Activated CD4-positive, alpha-beta memory T cell treated with anti-CD3 and anti-CD28 coated beads, Interleukin-2, amount 10 ng/mL, durations not matched to agents 7 days and 5 days (primary cell): ENCODE measurements at regions of chr3 and their contacts with region 1.

Region 1: GRCh38 chr3:183085634-183086390 is 13.5 kb downstream of the MCCC1 start:
- DNase-seq: no peak
- H3K4me3 Mint-ChIP-seq: no peak overlapping the region
- H3K27ac Mint-ChIP-seq: no peak overlapping the region
- H3K4me1 Mint-ChIP-seq: no peaks in the 10 kb centered on the region
- H3K27me3 Mint-ChIP-seq: no peaks in the 10 kb centered on the region

Region 2: DNA sequence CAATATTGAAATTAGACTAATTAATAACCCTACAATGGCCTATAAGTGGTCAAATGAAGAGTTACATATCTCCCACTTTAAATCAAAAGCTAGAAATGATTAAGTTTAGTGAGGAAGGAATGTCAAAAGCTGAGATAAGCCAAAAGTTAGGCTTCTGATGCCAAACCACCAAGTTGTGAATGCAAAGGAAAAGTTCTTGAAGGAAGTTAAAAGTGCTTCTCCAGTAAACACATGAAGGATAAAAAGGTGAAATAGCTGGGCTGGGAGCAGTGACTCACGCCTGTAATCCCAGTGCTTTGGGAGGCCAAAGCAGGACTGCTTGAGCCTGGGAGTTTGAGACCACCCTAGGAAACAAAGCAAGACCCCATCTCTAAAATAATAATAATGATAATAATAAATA is 58.5 kb before region 1 on chr3:
- CTCF ChIA-PET with region 1: no interaction called
- POLR2A ChIA-PET with region 1: no interaction called
- DNase-seq: no peak
- H3K4me3 Mint-ChIP-seq: no peak overlapping the region
- H3K27ac Mint-ChIP-seq: no peak overlapping the region
- H3K4me1 Mint-ChIP-seq: no peaks in the 10 kb centered on the region
- H3K27me3 Mint-ChIP-seq: no peaks in the 10 kb centered on the region

Region 3: DNA sequence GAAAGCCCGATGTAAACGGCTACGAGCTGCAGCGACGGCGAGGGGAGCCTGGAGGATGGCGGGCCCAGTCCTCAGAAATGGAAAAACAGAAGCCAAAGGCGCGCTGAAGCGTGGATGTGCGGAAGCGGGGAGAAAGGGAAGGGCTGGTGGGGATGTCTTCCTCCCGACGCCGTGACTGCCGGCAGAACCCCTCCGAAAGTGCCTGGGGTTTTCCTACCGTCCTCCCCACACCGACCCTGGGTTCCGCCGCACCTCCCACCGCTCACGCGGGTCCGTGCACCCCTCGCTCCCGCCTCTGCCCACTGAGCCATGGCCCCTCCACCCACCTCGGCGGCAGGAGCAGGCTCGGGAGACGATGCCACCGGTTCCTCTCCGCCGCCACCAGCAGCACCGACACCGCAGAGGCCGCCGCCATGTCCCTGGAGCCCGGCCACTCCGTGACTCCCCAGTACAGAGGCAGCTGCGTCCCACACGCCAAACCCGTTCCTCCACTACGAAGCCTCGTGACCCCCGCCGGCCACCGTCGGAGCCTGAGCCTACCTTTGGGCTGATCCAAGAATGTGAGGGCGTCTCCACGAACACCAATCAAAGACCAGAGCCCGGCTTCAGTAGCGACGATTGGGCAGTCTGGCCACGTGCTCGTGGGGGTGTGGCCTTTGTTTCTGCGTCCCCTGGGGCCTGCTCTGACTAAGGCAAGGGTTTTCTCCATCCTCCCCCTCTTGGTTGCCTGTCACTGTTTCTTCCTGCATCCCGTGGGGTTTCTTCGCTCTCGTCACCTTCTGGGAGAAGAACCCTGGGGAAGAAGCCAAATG is 13.4 kb after region 1 on chr3 and contains the start of gene MCCC1:
- CTCF ChIA-PET with region 1: interaction called, 42 read pairs
- POLR2A ChIA-PET with region 1: interaction called, 4 read pairs
- DNase-seq: peak; percentile 98
- H3K4me3 Mint-ChIP-seq: peak within 1 kb of the TSS; percentile 96
- H3K27ac Mint-ChIP-seq: peak within 1 kb of the TSS; percentile 84
- H3K4me1 Mint-ChIP-seq: peaks cover 30% of the 10 kb centered on the region
- H3K27me3 Mint-ChIP-seq: no peaks in the 10 kb centered on the region
- total RNA-seq, gene MCCC1: 23.5 to 27.5 TPM

Region 4: DNA sequence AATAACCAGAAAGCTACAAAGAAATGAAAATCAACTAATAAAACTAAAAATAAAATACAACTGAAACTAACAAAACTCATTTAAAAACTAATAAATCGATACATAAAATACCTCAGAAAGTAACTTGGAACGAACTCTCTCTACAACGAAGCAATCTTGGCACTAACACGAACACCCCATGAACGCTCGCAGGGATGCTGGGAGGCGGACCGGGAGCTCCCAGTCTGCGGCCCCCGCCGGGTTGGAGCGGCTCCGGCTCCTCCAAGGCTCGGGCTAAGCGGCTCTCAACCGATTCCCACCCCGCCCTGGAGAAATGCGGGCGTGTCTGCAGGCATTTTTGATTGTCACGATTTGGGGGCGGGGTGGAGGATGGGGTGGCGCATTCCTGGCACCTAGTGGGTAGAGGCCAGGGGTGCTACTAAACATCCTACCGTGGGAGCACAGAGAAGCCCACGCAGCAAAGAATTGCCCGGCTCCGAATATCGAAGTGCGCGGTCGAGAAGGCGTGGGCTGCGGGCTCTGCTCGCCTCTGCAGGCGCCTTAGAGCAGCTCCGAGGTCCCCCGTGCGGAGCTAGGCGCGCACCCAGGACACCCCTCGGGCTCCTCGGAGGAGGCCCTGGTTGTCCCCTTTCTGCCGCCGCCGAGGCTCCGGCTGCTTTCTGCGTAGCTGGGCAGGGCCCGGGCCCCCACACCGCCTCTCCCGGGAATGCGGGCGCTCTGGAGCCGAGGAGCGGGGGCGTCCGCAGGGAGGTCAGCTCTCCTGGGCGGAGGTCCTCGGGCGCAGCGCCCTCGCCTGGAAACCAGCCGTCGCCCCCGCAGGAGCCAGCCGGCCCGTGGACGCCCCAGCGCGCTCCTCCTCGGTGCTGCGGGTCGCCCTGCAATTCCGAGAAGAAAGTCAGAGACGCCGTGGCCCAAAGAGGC is 93.1 kb after region 1 on chr3:
- CTCF ChIA-PET with region 1: no interaction called
- POLR2A ChIA-PET with region 1: no interaction called
- DNase-seq: peak; percentile 48
- H3K4me3 Mint-ChIP-seq: peak overlapping the region; percentile 65
- H3K27ac Mint-ChIP-seq: no peak overlapping the region
- H3K4me1 Mint-ChIP-seq: peaks cover 12% of the 10 kb centered on the region
- H3K27me3 Mint-ChIP-seq: peaks cover 33% of the 10 kb centered on the region

Region 5: GRCh38 chr3:183385698-183386613 is 300.1 kb after region 1 on chr3:
- CTCF ChIA-PET with region 1: no interaction called
- POLR2A ChIA-PET with region 1: no interaction called
- DNase-seq: peak; percentile 60
- H3K4me3 Mint-ChIP-seq: no peak overlapping the region
- H3K27ac Mint-ChIP-seq: no peak overlapping the region
- H3K4me1 Mint-ChIP-seq: peaks cover 3% of the 10 kb centered on the region
- H3K27me3 Mint-ChIP-seq: no peaks in the 10 kb centered on the region